A673 (cell line): ENCODE measurements at regions of chrX and their contacts with region 1.

Region 1: GRCh38 chrX:139077281-139078250 is 366.0 kb upstream of the FGF13 start:
- DNase-seq: peak; percentile 74
- H3K4me3 ChIP-seq: no peak overlapping the region
- H3K27ac ChIP-seq: peak overlapping the region; percentile 65
- H3K4me1 ChIP-seq: peaks cover 66% of the 10 kb centered on the region
- H3K27me3 ChIP-seq: no peaks in the 10 kb centered on the region
- CTCF ChIP-seq: no peak

Region 2: GRCh38 chrX:138775517-138775916 is 302.0 kb before region 1 on chrX:
- CTCF ChIA-PET with region 1: no interaction called
- POLR2A ChIA-PET with region 1: no interaction called
- intact Hi-C with region 1: loop called (anchors 10 kb)
- DNase-seq: peak; percentile 71
- H3K4me3 ChIP-seq: no peak overlapping the region
- H3K27ac ChIP-seq: no peak overlapping the region
- H3K4me1 ChIP-seq: peaks cover 22% of the 10 kb centered on the region
- H3K27me3 ChIP-seq: no peaks in the 10 kb centered on the region
- CTCF ChIP-seq: peak; percentile 60

Region 3: GRCh38 chrX:138858438-138858837 is 219.1 kb before region 1 on chrX:
- CTCF ChIA-PET with region 1: no interaction called
- POLR2A ChIA-PET with region 1: no interaction called
- intact Hi-C with region 1: loop called (anchors 10 kb)
- DNase-seq: peak; percentile 74
- H3K4me3 ChIP-seq: no peak overlapping the region
- H3K27ac ChIP-seq: peak overlapping the region; percentile 50
- H3K4me1 ChIP-seq: peaks cover 21% of the 10 kb centered on the region
- H3K27me3 ChIP-seq: no peaks in the 10 kb centered on the region
- CTCF ChIP-seq: no peak

Region 4: DNA sequence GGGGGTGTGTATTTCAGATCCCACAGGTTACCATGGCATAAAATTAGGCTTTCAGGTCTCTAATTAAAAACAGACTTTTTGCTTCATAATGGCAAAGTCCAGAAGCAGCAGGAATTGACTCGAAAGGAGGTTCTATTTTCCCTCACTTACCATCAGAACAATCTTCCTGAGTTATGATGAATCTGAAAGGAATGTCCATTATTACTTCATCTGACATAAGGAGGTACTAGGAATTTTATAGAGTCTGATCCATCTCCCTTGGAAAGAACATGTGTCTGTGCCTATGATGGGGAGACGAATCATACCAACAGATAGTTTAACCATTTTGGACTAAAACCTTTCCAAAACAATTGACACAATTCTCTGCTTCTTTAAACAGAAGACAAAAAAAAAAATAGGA is 159.8 kb before region 1 on chrX:
- CTCF ChIA-PET with region 1: no interaction called
- POLR2A ChIA-PET with region 1: no interaction called
- intact Hi-C with region 1: loop called (anchors 10 kb)
- DNase-seq: peak; percentile 44
- H3K4me3 ChIP-seq: no peak overlapping the region
- H3K27ac ChIP-seq: no peak overlapping the region
- H3K4me1 ChIP-seq: peaks cover 18% of the 10 kb centered on the region
- H3K27me3 ChIP-seq: no peaks in the 10 kb centered on the region
- CTCF ChIP-seq: no peak

Region 5: GRCh38 chrX:138982365-138982764 is 95.2 kb before region 1 on chrX:
- CTCF ChIA-PET with region 1: interaction called, 10 read pairs
- POLR2A ChIA-PET with region 1: interaction called, 3 read pairs
- intact Hi-C with region 1: no loop called
- DNase-seq: no peak
- H3K4me3 ChIP-seq: no peak overlapping the region
- H3K27ac ChIP-seq: no peak overlapping the region
- H3K4me1 ChIP-seq: no peaks in the 10 kb centered on the region
- H3K27me3 ChIP-seq: no peaks in the 10 kb centered on the region
- CTCF ChIP-seq: no peak